B cell (primary cell): ENCODE measurements at regions of chr11 and their contacts with region 1.

Region 1: DNA sequence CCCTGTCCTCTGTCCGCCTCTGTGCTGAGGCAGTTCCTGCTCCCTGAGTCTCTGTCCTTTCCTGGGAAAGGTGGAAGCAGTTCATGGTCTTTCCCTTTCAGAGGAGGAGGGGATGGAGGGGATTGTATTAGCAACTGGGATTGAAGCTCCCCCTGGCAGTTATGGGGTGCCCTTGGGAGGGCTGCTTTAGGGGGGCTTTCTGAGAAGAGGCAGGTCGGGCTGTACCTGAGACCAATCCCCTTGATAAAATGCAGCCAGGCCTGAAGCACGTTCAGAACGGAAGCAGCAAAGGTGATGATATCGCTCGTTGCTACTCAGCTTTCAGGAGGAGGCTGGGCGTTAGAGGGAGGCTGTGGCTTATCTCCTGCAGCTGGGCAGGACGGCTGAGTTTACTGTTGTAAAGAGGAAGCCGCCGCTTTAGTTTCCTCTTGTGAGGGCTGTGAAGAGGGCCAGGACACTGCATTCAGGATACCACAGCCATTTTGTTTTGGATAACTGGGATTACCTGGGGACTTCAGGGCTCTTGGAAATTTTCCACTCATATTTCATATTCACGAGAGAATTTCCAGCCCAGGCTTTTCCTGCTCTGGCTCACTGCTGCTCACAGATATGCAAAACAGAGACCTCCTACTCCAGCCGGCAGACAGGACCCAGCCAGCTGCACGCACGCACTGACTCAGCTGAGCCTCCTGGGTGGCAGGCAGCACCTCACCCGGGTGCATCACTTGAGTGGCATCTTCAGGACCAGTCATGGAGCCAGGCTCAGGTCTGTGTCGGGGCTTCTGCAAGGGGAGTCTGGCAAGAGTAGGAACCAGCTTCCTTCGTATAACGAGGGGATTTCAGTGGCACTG is 798 bp downstream of the AMPD3 start:
- DNase-seq: peak; percentile 85
- ATAC-seq: peak; percentile 72
- H3K4me3 ChIP-seq: peak overlapping the region; percentile 52 to 69 (median 66)
- H3K4me3 Mint-ChIP-seq: peak overlapping the region; percentile 96
- H3K27ac ChIP-seq: peak overlapping the region; percentile 75 to 98
- H3K27ac Mint-ChIP-seq: peak overlapping the region; percentile 98
- H3K4me1 ChIP-seq: peaks cover 69 to 83% of the 10 kb centered on the region in 2 donors
- H3K4me1 Mint-ChIP-seq: peaks cover 81% of the 10 kb centered on the region
- H3K27me3 ChIP-seq: no peaks in the 10 kb centered on the region
- H3K27me3 Mint-ChIP-seq: no peaks in the 10 kb centered on the region
- CTCF ChIP-seq: no peak

Region 2: GRCh38 chr11:10405855-10406592 is 49.8 kb before region 1 on chr11:
- CTCF ChIA-PET with region 1: interaction called, 146 read pairs
- POLR2A ChIA-PET with region 1: no interaction called
- intact Hi-C with region 1: no loop called
- DNase-seq: peak; percentile 72
- ATAC-seq: peak; percentile 85
- H3K4me3 ChIP-seq: no peak overlapping the region
- H3K4me3 Mint-ChIP-seq: no peak overlapping the region
- H3K27ac ChIP-seq: no peak overlapping the region
- H3K27ac Mint-ChIP-seq: no peak overlapping the region
- H3K4me1 ChIP-seq: peaks cover 4 to 11% of the 10 kb centered on the region in 2 donors
- H3K4me1 Mint-ChIP-seq: peaks cover 7% of the 10 kb centered on the region
- H3K27me3 ChIP-seq: no peaks in the 10 kb centered on the region
- H3K27me3 Mint-ChIP-seq: no peaks in the 10 kb centered on the region
- CTCF ChIP-seq: peak; percentile 78

Region 3: DNA sequence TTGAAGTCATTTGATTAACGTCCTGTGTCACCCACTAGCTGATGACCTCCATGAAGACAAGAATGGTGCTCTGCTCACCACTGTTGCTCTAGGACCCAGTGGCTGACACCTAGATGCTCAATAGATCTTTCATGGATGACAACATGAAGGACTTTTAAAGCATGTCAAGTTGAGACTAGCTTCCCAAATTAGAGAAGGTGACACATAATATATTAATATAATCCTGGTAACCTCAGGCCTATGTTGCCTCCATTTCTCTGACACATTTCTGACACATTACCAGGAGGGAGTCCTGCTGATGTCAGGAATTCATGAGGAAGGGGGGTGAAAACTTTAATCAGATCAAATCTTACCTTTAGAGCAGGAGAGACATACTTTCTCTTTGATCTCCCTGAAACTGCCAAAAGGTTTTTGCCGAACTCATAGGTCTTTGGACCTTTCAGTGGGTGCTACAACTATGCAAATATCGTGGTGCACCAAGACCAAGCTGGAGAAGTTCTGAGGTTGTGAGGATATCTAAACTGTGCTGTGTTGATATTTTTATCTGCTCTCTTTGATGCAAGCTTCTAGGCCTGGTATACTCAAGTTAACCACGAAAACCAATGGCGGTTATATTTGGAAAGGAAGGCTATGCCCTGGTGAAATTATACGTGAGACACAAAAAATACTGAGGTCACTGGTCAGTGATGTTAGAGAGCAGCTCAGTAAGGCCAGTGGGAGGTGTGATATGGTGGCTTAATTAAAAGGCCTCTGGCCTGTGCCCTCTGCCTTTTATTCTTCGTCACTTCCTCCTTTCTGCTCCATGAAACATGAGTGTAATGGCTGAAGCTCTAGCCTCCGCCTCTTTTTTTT is 14.0 kb before region 1 on chr11:
- CTCF ChIA-PET with region 1: interaction called, 30 read pairs
- POLR2A ChIA-PET with region 1: interaction called, 38 read pairs
- intact Hi-C with region 1: loop called (anchors 1 kb)
- DNase-seq: peak; percentile 85
- ATAC-seq: peak; percentile 89
- H3K4me3 ChIP-seq: peak overlapping the region in 2 of 5 experiments; percentile 1 to 20
- H3K4me3 Mint-ChIP-seq: peak overlapping the region; percentile 61
- H3K27ac ChIP-seq: peak overlapping the region; percentile 89 to 96
- H3K27ac Mint-ChIP-seq: peak overlapping the region; percentile 97
- H3K4me1 ChIP-seq: peaks cover 38 to 41% of the 10 kb centered on the region in 2 donors
- H3K4me1 Mint-ChIP-seq: peaks cover 39% of the 10 kb centered on the region
- H3K27me3 ChIP-seq: no peaks in the 10 kb centered on the region
- H3K27me3 Mint-ChIP-seq: no peaks in the 10 kb centered on the region
- CTCF ChIP-seq: no peak

Region 4: GRCh38 chr11:10490398-10491241 is 34.8 kb after region 1 on chr11:
- CTCF ChIA-PET with region 1: interaction called, 25 read pairs
- POLR2A ChIA-PET with region 1: interaction called, 8 read pairs
- intact Hi-C with region 1: loop called (anchors 1 kb)
- DNase-seq: no peak
- ATAC-seq: no peak
- H3K4me3 ChIP-seq: no peak overlapping the region
- H3K4me3 Mint-ChIP-seq: no peak overlapping the region
- H3K27ac ChIP-seq: peak overlapping the region; percentile 94 to 98
- H3K27ac Mint-ChIP-seq: peak overlapping the region; percentile 90
- H3K4me1 ChIP-seq: peaks cover 24 to 34% of the 10 kb centered on the region in 2 donors
- H3K4me1 Mint-ChIP-seq: peaks cover 39% of the 10 kb centered on the region
- H3K27me3 ChIP-seq: no peaks in the 10 kb centered on the region
- H3K27me3 Mint-ChIP-seq: no peaks in the 10 kb centered on the region
- CTCF ChIP-seq: no peak

Region 5: GRCh38 chr11:10514210-10514609 is 58.3 kb after region 1 on chr11:
- CTCF ChIA-PET with region 1: interaction called, 11 read pairs
- POLR2A ChIA-PET with region 1: interaction called, 5 read pairs
- intact Hi-C with region 1: no loop called
- DNase-seq: peak; percentile 42
- ATAC-seq: no peak
- H3K4me3 ChIP-seq: no peak overlapping the region
- H3K4me3 Mint-ChIP-seq: no peak overlapping the region
- H3K27ac ChIP-seq: peak overlapping the region in 1 of 2 donors; percentile 7
- H3K27ac Mint-ChIP-seq: peak overlapping the region; percentile 43
- H3K4me1 ChIP-seq: no peaks in the 10 kb centered on the region
- H3K4me1 Mint-ChIP-seq: peaks cover 16% of the 10 kb centered on the region
- H3K27me3 ChIP-seq: no peaks in the 10 kb centered on the region
- H3K27me3 Mint-ChIP-seq: no peaks in the 10 kb centered on the region
- CTCF ChIP-seq: peak; percentile 62

Region 6: GRCh38 chr11:10606536-10607208 is 150.8 kb after region 1 on chr11:
- CTCF ChIA-PET with region 1: interaction called, 3 read pairs
- POLR2A ChIA-PET with region 1: interaction called, 7 read pairs
- intact Hi-C with region 1: loop called (anchors 5 kb)
- DNase-seq: peak; percentile 68
- ATAC-seq: peak; percentile 82
- H3K4me3 ChIP-seq: peak overlapping the region in 4 of 5 experiments; percentile 33 to 74 (median 50)
- H3K4me3 Mint-ChIP-seq: peak overlapping the region; percentile 83
- H3K27ac ChIP-seq: peak overlapping the region; percentile 84 to 91
- H3K27ac Mint-ChIP-seq: peak overlapping the region; percentile 97
- H3K4me1 ChIP-seq: peaks cover 90 to 97% of the 10 kb centered on the region in 2 donors
- H3K4me1 Mint-ChIP-seq: peaks cover 98% of the 10 kb centered on the region
- H3K27me3 ChIP-seq: no peaks in the 10 kb centered on the region
- H3K27me3 Mint-ChIP-seq: no peaks in the 10 kb centered on the region
- CTCF ChIP-seq: no peak

Region 7: GRCh38 chr11:10641177-10641911 is 185.5 kb after region 1 on chr11:
- CTCF ChIA-PET with region 1: interaction called, 3 read pairs
- POLR2A ChIA-PET with region 1: no interaction called
- intact Hi-C with region 1: loop called (anchors 2 kb)
- DNase-seq: peak; percentile 77
- ATAC-seq: peak; percentile 87
- H3K4me3 ChIP-seq: peak overlapping the region in 1 of 5 experiments; percentile 35
- H3K4me3 Mint-ChIP-seq: peak overlapping the region; percentile 74
- H3K27ac ChIP-seq: peak overlapping the region; percentile 87 to 88
- H3K27ac Mint-ChIP-seq: peak overlapping the region; percentile 94
- H3K4me1 ChIP-seq: peaks cover 55 to 79% of the 10 kb centered on the region in 2 donors
- H3K4me1 Mint-ChIP-seq: peaks cover 81% of the 10 kb centered on the region
- H3K27me3 ChIP-seq: no peaks in the 10 kb centered on the region
- H3K27me3 Mint-ChIP-seq: no peaks in the 10 kb centered on the region
- CTCF ChIP-seq: no peak

Region 8: GRCh38 chr11:10824888-10825287 is 369.0 kb after region 1 on chr11:
- CTCF ChIA-PET with region 1: no interaction called
- POLR2A ChIA-PET with region 1: no interaction called
- intact Hi-C with region 1: no loop called
- DNase-seq: peak; percentile 74
- ATAC-seq: peak; percentile 97
- H3K4me3 ChIP-seq: peak overlapping the region in 1 of 5 experiments; percentile 20
- H3K4me3 Mint-ChIP-seq: peak overlapping the region; percentile 70
- H3K27ac ChIP-seq: peak overlapping the region; percentile 49 to 71
- H3K27ac Mint-ChIP-seq: peak overlapping the region; percentile 89
- H3K4me1 ChIP-seq: peaks cover 21 to 24% of the 10 kb centered on the region in 2 donors
- H3K4me1 Mint-ChIP-seq: peaks cover 24% of the 10 kb centered on the region
- H3K27me3 ChIP-seq: no peaks in the 10 kb centered on the region
- H3K27me3 Mint-ChIP-seq: no peaks in the 10 kb centered on the region
- CTCF ChIP-seq: no peak